A673 (cell line): ENCODE measurements at regions of chr4 and their contacts with region 1.

Region 1: DNA sequence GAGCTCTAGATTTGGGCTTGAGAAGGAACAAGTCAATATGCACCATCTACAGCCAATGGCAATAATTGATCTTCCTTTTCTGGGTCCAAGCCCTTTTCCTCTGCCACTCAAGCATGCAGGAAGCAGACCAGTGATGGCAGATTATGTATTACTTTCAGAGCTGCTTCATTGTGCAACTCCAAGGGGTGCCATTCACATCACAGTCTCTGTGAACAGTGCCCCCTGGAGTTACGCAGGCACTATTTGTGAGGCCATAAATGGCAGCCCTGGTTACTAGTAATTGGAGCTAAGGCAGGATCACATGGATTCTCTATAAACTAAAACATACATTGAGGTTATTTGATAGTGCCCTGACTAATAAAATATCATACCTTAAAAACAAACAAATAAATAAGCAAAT is 313.4 kb upstream of the SLC7A11 start:
- DNase-seq: peak; percentile 85
- H3K4me3 ChIP-seq: no peak overlapping the region
- H3K27ac ChIP-seq: no peak overlapping the region
- H3K4me1 ChIP-seq: peaks cover 35% of the 10 kb centered on the region
- H3K27me3 ChIP-seq: no peaks in the 10 kb centered on the region
- CTCF ChIP-seq: peak; percentile 71

Region 2: DNA sequence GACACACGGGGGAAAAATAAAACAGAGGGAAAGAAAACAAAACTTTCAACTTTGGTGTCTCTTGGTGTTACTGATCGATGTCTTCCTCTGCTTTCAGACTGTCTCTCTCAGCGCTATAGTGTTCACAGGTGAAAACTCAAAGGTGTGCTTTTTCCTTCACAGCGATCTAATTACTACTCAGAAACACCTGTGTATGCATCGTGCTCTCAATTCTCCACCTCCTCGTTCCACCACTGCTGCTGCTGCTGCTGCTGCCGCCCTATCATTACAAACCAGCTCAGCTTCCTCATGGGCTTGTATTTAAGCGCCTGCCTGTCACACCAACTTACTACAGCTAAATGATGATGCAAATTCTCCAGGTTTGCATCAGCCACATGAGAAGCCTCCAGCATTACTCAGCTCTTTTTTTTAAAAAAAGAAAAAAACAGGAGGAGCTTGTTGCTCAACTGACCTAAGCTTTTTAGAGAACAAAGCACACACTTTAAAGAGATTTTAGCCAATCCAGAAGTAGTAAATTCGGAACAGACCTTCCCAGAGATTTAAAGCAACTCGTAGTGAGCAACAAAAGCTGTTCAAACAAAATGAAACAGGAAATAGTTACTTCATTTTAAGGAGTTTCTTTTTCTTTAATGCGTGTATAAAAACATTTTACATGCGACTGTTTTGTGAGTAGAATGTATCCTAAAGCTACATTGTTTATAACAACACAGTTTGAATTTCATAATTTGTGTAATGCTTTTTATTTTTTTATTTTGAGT is 313.3 kb before region 1 on chr4 and contains the start of gene SLC7A11:
- CTCF ChIA-PET with region 1: no interaction called
- POLR2A ChIA-PET with region 1: no interaction called
- intact Hi-C with region 1: loop called (anchors 5 kb)
- DNase-seq: peak; percentile 98
- H3K4me3 ChIP-seq: peak within 1 kb of the TSS; percentile 87
- H3K27ac ChIP-seq: peak within 1 kb of the TSS; percentile 98
- H3K4me1 ChIP-seq: peaks cover 34% of the 10 kb centered on the region
- H3K27me3 ChIP-seq: no peaks in the 10 kb centered on the region
- CTCF ChIP-seq: no peak
- total RNA-seq, gene SLC7A11: 40.6 and 43.8 TPM in 2 replicates

Region 3: DNA sequence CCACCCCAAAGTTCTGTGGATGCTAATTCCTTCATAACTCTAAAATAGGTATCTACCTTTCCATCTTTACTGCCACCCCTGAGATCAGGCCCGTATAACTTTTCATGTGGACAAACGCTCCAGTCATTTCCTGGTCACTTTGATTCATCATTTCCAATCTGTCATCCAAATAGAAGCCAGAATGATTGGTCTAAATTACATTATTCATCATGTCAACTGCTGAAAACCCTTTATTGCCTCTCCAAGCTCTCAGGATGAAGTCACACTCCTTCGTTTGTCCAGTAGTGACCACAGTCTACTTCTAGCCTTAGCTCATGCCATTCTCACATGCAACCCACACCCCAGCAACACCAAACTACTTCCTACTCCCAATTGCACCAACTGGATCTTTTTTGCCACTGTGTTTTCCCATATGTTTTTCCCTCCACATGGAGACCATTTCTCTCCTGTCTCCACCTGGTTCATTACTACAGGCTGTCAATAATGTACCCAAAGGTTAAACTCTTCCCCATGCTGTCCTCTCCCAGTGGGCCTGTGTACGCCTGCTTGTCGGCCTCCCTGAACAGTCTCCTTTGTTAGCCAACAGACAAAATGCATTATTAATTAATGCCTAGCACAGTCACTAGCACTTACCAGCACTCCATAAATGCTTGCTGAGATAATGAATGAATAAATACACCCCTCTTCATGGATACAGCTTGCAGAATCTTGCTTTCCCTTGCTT is 77.4 kb after region 1 on chr4:
- CTCF ChIA-PET with region 1: no interaction called
- POLR2A ChIA-PET with region 1: no interaction called
- intact Hi-C with region 1: no loop called
- DNase-seq: no peak
- H3K4me3 ChIP-seq: no peak overlapping the region
- H3K27ac ChIP-seq: no peak overlapping the region
- H3K4me1 ChIP-seq: no peaks in the 10 kb centered on the region
- H3K27me3 ChIP-seq: peaks cover 5% of the 10 kb centered on the region
- CTCF ChIP-seq: no peak